Activated T-helper 2 cell treated with anti-CD3 and anti-CD28 coated beads, Interferon-gamma antibody, Interleukin-2, Interleukin-4, amounts not matched to agents 10 μg/mL and 5 μg/mL and 100 μg/mL, durations not matched to agents 14 hours and 24 hours and 36 hours (primary cell): ENCODE measurements at regions of chr12 and their contacts with region 1.

Region 1: DNA sequence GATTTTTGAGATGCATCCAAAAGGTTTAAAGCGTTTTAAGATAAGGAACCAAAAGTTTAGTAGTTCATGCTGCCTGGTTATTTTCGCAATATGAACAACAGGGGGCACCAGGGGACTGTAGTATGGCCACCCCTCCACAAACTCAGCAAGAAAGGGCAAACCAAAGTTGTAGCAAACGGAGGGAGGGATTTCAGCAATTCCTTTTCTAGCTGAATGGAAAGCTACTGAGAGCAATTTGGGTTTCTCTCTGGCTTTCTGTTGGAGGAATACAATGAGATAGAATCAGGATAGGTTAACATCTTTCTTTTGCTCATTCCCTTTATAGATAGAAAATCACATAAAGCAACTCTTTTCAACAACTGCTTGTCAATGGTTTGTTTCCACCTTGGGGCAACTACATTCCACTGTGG is 62.5 kb downstream of the DRAM1 start:
- DNase-seq: peak; percentile 49
- H3K4me3 Mint-ChIP-seq: no peak overlapping the region
- H3K27ac Mint-ChIP-seq: no peak overlapping the region
- H3K4me1 Mint-ChIP-seq: peaks cover 40% of the 10 kb centered on the region
- H3K27me3 Mint-ChIP-seq: peaks cover 2% of the 10 kb centered on the region

Region 2: GRCh38 chr12:101604132-101604531 is 335.7 kb before region 1 on chr12:
- intact Hi-C with region 1: no loop called
- DNase-seq: no peak
- H3K4me3 Mint-ChIP-seq: no peak overlapping the region
- H3K27ac Mint-ChIP-seq: no peak overlapping the region
- H3K4me1 Mint-ChIP-seq: no peaks in the 10 kb centered on the region
- H3K27me3 Mint-ChIP-seq: peaks cover 3% of the 10 kb centered on the region

Region 3: DNA sequence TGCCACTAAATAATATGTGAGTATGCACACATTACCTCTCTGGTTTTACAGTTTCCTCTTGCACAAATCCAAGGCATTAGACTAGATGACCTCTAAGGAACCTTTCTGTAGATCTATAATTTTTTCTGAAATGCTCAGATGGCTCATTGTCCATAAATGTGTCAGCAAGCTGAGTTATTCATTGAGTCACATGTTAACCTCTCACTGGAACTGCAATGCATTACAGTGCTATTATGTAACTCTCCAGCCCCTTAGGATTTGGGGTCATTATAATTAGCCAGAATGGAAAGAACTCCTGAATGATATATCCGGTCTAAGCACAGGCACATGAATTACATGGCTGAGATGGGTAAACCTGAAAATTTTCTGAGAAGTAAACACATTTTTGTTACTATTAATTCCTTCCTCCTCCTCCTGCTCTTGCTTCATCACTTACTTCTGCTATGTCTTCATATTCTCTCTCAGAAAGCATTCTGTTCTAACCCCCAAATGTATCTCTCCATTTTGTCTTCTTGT is 82.8 kb before region 1 on chr12:
- intact Hi-C with region 1: loop called (anchors 1 kb)
- DNase-seq: no peak
- H3K4me3 Mint-ChIP-seq: no peak overlapping the region
- H3K27ac Mint-ChIP-seq: no peak overlapping the region
- H3K4me1 Mint-ChIP-seq: peaks cover 38% of the 10 kb centered on the region
- H3K27me3 Mint-ChIP-seq: no peaks in the 10 kb centered on the region

Region 4: GRCh38 chr12:102119674-102120563 is 180.1 kb after region 1 on chr12 and contains the starts of genes NUP37 and PARPBP:
- intact Hi-C with region 1: loop called (anchors 1 kb)
- DNase-seq: peak; percentile 91
- H3K4me3 Mint-ChIP-seq: peak within 1 kb of the TSS; percentile 89
- H3K27ac Mint-ChIP-seq: peak within 1 kb of the TSS; percentile 77
- H3K4me1 Mint-ChIP-seq: peaks cover 36% of the 10 kb centered on the region
- H3K27me3 Mint-ChIP-seq: no peaks in the 10 kb centered on the region
- total RNA-seq, gene NUP37: 93.1 and 93.9 TPM in 2 replicates
- total RNA-seq, gene PARPBP: 27.0 and 27.4 TPM in 2 replicates

Region 5: GRCh38 chr12:102300824-102301461 is 361.1 kb after region 1 on chr12:
- intact Hi-C with region 1: loop called (anchors 5 kb)
- DNase-seq: peak; percentile 12
- H3K4me3 Mint-ChIP-seq: no peak overlapping the region
- H3K27ac Mint-ChIP-seq: no peak overlapping the region
- H3K4me1 Mint-ChIP-seq: peaks cover 31% of the 10 kb centered on the region
- H3K27me3 Mint-ChIP-seq: peaks cover 18% of the 10 kb centered on the region

Region 6: DNA sequence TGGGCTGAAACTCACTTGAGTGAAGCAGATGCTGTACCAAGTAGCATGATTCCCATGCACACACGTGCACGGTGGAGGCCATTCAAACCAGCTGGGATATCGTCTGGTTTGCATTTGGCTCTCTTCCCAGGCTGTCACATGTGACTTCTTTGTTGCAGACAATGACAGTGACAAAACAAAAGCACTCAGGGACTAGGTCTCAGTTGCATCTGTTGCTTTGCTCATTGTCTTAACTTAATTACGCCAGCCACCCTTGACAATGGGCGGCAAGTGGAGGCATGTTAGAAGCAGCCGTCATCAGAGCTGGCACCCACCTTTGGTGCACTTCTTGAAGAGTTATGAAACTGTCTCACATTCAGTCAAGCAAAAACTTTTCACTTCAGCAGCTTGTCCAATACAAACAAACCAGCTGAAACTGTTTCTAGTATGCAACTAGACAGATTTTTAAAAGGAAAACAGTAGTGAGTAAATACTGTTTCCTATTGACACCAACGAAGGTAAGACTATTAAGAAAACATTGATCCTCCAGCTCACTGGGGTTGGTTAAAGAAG is 466.2 kb after region 1 on chr12:
- intact Hi-C with region 1: no loop called
- DNase-seq: no peak
- H3K4me3 Mint-ChIP-seq: no peak overlapping the region
- H3K27ac Mint-ChIP-seq: no peak overlapping the region
- H3K4me1 Mint-ChIP-seq: peaks cover 17% of the 10 kb centered on the region
- H3K27me3 Mint-ChIP-seq: peaks cover 5% of the 10 kb centered on the region

Region 7: GRCh38 chr12:102702447-102703114 is 762.7 kb after region 1 on chr12:
- intact Hi-C with region 1: loop called (anchors 1 kb)
- DNase-seq: peak; percentile 16
- H3K4me3 Mint-ChIP-seq: no peak overlapping the region
- H3K27ac Mint-ChIP-seq: no peak overlapping the region
- H3K4me1 Mint-ChIP-seq: no peaks in the 10 kb centered on the region
- H3K27me3 Mint-ChIP-seq: peaks cover 25% of the 10 kb centered on the region